Dorsolateral prefrontal cortex (tissue), 120 donors: ENCODE measurements at regions of chr11 and their contacts with region 1.

Region 1: DNA sequence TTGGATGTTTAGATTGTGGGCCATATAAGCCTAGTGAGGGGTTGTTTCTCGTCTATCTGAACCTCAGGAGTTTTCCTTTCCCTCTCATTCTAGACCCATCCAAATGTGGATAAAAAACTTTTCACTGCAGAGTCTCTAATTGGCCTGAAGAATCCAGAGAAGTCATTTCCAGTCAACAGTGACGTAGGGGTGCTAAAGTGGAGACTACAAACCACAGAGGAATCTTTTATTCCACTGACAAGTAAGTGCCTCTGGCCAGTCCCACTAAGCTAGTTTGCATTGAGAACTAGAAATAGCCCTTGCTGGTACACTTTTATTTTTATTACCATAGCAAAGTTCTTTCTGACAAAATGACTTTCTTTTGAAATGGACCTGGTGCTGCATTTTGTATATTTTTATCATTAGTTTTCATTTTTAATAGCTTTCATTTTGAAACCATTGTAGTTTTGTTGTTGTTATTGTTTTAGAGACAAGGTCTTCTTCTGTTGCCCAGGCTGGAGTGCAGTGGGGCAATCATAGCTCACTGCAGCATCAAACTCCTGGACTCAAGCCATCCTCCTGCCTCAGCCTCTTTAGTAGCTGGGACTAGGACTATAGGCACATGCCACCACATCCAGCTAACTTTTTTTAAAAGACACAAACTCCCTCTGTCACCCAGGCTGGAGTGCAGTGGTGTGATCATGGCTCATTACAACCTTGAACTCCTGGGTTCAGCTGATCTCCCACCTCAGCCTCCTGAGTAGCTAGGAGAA is 14.6 kb upstream of the PHLDB1 start:
- DNase-seq: peak in 2 of 10 donors; percentile 53 to 56
- H3K4me3 ChIP-seq: peak overlapping the region in 1 of 59 donors; percentile 3
- H3K27ac ChIP-seq: peak overlapping the region in 57 of 59 donors; percentile 3 to 91 (median 77)
- H3K27me3 ChIP-seq: no peaks in the 10 kb centered on the region
- CTCF ChIP-seq: no peak

Region 2: GRCh38 chr11:118610804-118611795 is 18.3 kb after region 1 on chr11:
- intact Hi-C with region 1: loop called in 1 of 2 experiments (anchors 2 kb)
- DNase-seq: peak; percentile 69 to 86 (median 78)
- H3K4me3 ChIP-seq: peak overlapping the region; percentile 42 to 91 (median 63)
- H3K27ac ChIP-seq: peak overlapping the region; percentile 84 to 99 (median 97)
- H3K27me3 ChIP-seq: no peaks in the 10 kb centered on the region
- CTCF ChIP-seq: peak; percentile 77 to 97 (median 89)